Activated B cell treated with CpG ODN at 0.5 μM for 24 hours (primary cell): ENCODE measurements at regions of chr21 and their contacts with region 1.

Region 1: DNA sequence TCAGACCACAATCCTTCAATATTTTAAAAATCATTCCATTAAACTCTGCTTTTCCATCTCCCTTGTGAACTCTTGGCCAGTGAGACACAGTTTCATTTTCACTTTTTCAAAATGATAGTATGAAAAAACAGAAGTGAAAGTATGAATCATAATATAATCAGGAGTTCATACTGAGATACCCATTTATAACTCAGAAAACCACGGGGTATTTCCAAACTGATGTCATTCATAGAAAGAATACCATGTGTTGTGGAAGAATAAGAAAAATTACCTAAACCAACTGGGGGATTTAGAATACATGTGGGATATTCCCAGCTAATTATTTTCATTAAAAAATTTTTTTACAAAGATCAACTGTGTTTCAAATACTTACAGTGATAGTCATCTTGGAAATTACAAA is 149.9 kb downstream of the MRPL39 start:
- DNase-seq: no peak
- ATAC-seq: peak; percentile 65
- H3K4me3 Mint-ChIP-seq: peak overlapping the region; percentile 65
- H3K27ac Mint-ChIP-seq: peak overlapping the region; percentile 87
- H3K4me1 Mint-ChIP-seq: peaks cover 66% of the 10 kb centered on the region
- H3K27me3 Mint-ChIP-seq: no peaks in the 10 kb centered on the region
- CTCF ChIP-seq: no peak

Region 2: GRCh38 chr21:25054689-25055088 is 402.7 kb before region 1 on chr21:
- CTCF ChIA-PET with region 1: no interaction called
- POLR2A ChIA-PET with region 1: no interaction called
- intact Hi-C with region 1: no loop called
- DNase-seq: no peak
- ATAC-seq: peak; percentile 45
- H3K4me3 Mint-ChIP-seq: no peak overlapping the region
- H3K27ac Mint-ChIP-seq: no peak overlapping the region
- H3K4me1 Mint-ChIP-seq: peaks cover 14% of the 10 kb centered on the region
- H3K27me3 Mint-ChIP-seq: no peaks in the 10 kb centered on the region
- CTCF ChIP-seq: no peak

Region 3: GRCh38 chr21:25396135-25396711 is 61.2 kb before region 1 on chr21:
- CTCF ChIA-PET with region 1: no interaction called
- POLR2A ChIA-PET with region 1: interaction called, 3 read pairs
- intact Hi-C with region 1: loop called (anchors 1 kb)
- DNase-seq: peak; percentile 33
- ATAC-seq: peak; percentile 88
- H3K4me3 Mint-ChIP-seq: peak overlapping the region; percentile 81
- H3K27ac Mint-ChIP-seq: peak overlapping the region; percentile 84
- H3K4me1 Mint-ChIP-seq: peaks cover 31% of the 10 kb centered on the region
- H3K27me3 Mint-ChIP-seq: no peaks in the 10 kb centered on the region
- CTCF ChIP-seq: no peak

Region 4: DNA sequence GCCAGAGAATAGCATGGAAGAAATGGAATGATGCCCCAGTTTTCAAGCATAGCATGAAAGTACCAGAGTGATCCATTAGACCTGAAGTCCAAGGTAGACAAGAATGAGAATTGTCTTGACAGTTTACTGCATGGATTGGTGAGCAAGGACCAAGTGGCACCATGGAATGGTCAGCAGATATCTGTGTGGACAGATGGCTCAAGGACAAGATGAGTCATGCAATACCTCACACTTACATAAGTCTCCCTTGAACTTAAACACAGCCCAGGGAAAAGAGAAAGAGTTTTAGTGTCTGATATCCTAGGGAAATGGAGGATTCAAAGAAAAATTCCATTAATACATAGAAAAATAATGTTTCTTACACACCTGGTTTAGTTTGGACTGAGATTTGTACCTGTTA is 45.3 kb before region 1 on chr21:
- CTCF ChIA-PET with region 1: no interaction called
- POLR2A ChIA-PET with region 1: no interaction called
- intact Hi-C with region 1: no loop called
- DNase-seq: no peak
- ATAC-seq: no peak
- H3K4me3 Mint-ChIP-seq: no peak overlapping the region
- H3K27ac Mint-ChIP-seq: no peak overlapping the region
- H3K4me1 Mint-ChIP-seq: peaks cover 42% of the 10 kb centered on the region
- H3K27me3 Mint-ChIP-seq: no peaks in the 10 kb centered on the region
- CTCF ChIP-seq: no peak

Region 5: DNA sequence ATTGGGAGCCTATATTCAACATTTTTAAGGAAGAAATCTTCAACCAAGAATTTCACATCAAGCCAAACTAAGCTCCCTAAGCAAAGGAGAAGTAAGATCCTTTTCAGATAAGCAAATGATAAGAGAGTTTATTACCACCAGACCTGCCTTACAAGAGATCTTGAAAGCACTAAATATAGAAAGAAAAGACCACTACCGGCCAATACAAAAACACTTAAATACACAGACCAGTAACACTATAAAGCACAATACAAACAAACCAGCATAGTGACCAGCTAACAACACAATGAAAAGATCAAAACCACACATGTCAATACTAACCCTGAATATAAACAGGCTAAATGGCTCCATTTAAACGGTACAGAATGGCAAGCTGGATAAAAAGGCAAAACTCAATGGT is 15.6 kb before region 1 on chr21:
- CTCF ChIA-PET with region 1: no interaction called
- POLR2A ChIA-PET with region 1: no interaction called
- intact Hi-C with region 1: loop called (anchors 2 kb)
- DNase-seq: no peak
- ATAC-seq: no peak
- H3K4me3 Mint-ChIP-seq: no peak overlapping the region
- H3K27ac Mint-ChIP-seq: no peak overlapping the region
- H3K4me1 Mint-ChIP-seq: peaks cover 4% of the 10 kb centered on the region
- H3K27me3 Mint-ChIP-seq: no peaks in the 10 kb centered on the region
- CTCF ChIP-seq: no peak

Region 6: DNA sequence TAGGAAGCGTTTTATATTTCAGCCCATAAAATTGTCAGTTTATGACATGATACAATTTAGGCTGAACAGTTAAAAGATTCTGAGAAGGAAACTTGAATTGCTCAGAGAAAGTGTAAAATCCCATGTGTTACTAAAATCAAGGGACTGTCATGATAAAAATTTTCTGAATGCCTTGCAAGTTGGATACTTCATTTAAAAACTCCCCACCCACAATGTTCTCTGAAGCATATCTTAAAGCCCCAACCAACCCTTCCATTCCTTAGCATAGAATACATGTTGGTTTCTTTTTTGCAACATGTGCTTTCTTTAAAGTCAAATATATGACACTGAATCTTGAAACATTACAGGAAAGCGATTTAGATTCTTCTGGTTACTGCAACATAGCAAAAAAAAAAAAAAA is 52.5 kb after region 1 on chr21:
- CTCF ChIA-PET with region 1: no interaction called
- POLR2A ChIA-PET with region 1: interaction called, 4 read pairs
- intact Hi-C with region 1: loop called (anchors 2 kb)
- DNase-seq: no peak
- ATAC-seq: peak; percentile 77
- H3K4me3 Mint-ChIP-seq: peak overlapping the region; percentile 55
- H3K27ac Mint-ChIP-seq: peak overlapping the region; percentile 63
- H3K4me1 Mint-ChIP-seq: peaks cover 45% of the 10 kb centered on the region
- H3K27me3 Mint-ChIP-seq: no peaks in the 10 kb centered on the region
- CTCF ChIP-seq: no peak

Region 7: DNA sequence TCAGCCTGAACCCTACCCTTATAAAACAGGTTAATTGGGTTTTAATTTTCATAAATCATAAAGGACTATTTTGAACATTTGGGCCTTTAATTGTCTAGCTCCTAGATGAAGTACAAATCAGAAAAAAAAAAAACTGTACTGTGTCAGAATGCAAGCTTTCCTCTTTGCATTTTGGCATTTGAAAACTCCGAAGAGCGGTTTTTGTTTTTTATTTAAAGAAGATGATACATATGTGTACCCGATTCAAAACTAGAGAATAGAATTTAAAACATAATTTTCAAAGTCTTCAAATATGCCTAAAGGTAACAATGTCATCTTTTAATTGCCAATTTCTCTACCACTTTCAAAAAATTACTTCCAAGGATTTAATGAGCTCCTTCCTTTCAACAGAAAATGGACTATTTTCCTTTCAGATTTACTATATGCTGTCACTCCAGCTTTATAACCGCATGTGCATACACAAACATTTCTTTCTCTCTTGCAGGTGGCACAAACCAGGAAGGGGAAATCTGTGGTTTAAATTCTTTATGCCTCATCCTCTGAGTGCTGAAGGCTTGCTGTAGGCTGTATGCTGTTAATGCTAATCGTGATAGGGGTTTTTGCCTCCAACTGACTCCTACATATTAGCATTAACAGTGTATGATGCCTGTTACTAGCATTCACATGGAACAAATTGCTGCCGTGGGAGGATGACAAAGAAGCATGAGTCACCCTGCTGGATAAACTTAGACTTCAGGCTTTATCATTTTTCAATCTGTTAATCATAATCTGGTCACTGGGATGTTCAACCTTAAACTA is 116.2 kb after region 1 on chr21:
- CTCF ChIA-PET with region 1: no interaction called
- POLR2A ChIA-PET with region 1: interaction called, 8 read pairs
- intact Hi-C with region 1: loop called (anchors 1 kb)
- DNase-seq: no peak
- ATAC-seq: peak; percentile 53
- H3K4me3 Mint-ChIP-seq: peak overlapping the region; percentile 75
- H3K27ac Mint-ChIP-seq: peak overlapping the region; percentile 90
- H3K4me1 Mint-ChIP-seq: peaks cover 90% of the 10 kb centered on the region
- H3K27me3 Mint-ChIP-seq: no peaks in the 10 kb centered on the region
- CTCF ChIP-seq: no peak